HepG2 (cell line): ENCODE measurements at regions of chr10 and their contacts with region 1.

Region 1: GRCh38 chr10:70540089-70540788 is 61.7 kb downstream of the PALD1 start:
- DNase-seq: peak; percentile 18
- ATAC-seq: peak; percentile 72
- H3K4me3 ChIP-seq: no peak overlapping the region
- H3K27ac ChIP-seq: no peak overlapping the region
- H3K4me1 ChIP-seq: peaks cover 30% of the 10 kb centered on the region
- H3K27me3 ChIP-seq: peaks cover 3 to 32% of the 10 kb centered on the region in 2 experiments; a peak in 3 of 5 replicates
- CTCF ChIP-seq: peak; percentile 94
- EP300 ChIP-seq: no peak
- POLR2A ChIP-seq: no peak
- RAD21 ChIP-seq: peak; percentile 77

Region 2: DNA sequence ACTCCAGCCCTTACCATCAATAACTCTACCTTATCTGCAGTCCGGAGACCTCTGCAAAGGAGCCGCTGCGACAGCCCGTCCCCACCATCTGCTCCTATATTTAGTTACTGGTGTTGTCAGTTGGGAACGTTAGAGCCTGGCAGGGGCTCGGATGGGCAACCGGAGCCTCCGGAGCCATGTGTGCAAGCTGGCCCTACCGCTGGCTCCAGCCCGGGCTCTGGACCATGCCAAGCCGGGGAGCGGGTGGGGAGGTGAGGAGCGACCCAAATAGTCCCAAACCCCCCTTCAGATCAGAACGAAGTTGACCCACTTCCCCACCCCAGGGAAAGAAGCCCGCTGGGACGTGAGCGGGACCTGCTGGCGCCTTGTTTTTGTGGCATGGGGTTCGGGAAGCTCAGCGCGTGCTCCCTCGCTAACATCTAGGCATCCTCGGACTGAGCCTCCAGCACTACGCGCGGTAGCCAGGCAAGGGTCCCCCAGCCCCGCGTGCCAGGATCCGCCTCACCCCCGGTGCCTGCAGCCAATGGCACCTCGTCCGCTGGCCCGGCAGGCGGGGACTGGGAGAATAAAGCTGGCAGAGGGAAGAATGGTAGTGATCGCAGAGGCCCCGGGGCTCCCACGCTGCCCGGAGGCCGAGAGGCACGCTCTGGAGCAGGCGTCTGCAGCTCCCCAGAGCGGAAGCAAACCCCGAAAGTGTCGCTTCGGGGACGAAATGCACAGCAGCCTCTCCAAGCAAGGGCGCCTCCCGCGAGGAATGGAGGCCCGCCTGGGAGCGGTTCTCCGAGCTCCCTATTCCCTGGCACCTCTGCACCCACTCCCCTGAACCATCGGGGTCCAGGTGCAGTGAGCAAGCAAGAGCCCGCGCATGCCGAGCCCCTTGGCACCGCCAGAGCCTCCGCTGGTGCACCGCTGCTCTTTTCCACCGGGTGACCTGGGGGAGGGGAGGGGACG is 158.5 kb before region 1 on chr10:
- CTCF ChIA-PET with region 1: interaction called, 4 read pairs
- POLR2A ChIA-PET with region 1: no interaction called
- in situ Hi-C with region 1: no loop called
- intact Hi-C with region 1: loop called (anchors 2 kb)
- DNase-seq: no peak
- ATAC-seq: peak; percentile 49
- H3K4me3 ChIP-seq: peak overlapping the region; percentile 71 to 87 (median 75)
- H3K27ac ChIP-seq: no peak overlapping the region
- H3K4me1 ChIP-seq: peaks cover 41% of the 10 kb centered on the region
- H3K27me3 ChIP-seq: peaks cover 2 to 23% of the 10 kb centered on the region in 2 experiments; a peak in 3 of 5 replicates
- CTCF ChIP-seq: no peak; the same call in 1 of the 2 replicates
- EP300 ChIP-seq: no peak
- POLR2A ChIP-seq: no peak
- RAD21 ChIP-seq: no peak

Region 3: DNA sequence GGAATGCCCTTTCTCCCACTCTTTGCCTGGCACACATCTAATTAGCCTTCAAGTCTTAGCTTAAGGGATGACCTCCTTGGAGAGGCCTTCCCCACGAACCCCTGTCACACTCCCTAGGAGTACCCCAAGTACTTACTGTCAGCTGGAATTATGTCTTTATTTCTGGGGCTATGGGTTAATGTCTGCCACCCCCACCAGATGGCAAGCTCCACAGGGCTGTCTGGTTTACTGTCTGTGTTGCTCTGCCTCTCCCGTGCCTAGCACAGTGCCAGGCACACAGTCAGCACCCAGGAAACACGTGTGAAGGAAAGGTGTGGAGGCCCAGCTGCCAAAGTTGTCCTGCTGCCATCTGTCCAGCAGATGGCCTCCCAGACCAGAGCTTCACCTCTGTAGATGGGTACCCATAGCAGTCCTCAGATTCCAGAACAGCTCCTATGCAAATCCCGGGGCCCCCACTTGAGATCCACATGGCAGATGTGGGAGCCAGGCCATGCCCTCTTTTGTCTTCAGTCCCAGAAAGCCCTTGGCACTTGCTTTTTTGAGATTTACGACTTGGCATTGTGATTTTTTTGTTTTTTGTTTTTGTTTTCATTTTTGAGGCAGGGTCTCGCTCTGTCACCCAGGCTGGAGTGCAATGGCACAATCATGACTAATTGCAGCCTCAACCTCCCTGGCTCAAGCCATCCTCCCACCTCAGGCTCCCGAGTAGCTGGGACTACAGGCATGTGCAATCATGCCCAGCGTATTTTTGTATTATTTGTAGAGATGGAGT is 78.8 kb before region 1 on chr10:
- CTCF ChIA-PET with region 1: interaction called, 14 read pairs
- POLR2A ChIA-PET with region 1: no interaction called
- in situ Hi-C with region 1: loop called (anchors 5 kb)
- intact Hi-C with region 1: loop called (anchors 1 kb)
- DNase-seq: peak; percentile 37
- ATAC-seq: peak; percentile 85
- H3K4me3 ChIP-seq: no peak overlapping the region
- H3K27ac ChIP-seq: no peak overlapping the region
- H3K4me1 ChIP-seq: no peaks in the 10 kb centered on the region
- H3K27me3 ChIP-seq: peaks cover 2 to 18% of the 10 kb centered on the region in 2 experiments; a peak in 4 of 5 replicates
- CTCF ChIP-seq: peak; percentile 89
- EP300 ChIP-seq: no peak
- POLR2A ChIP-seq: no peak
- RAD21 ChIP-seq: peak; percentile 82